ENCODE measurements at regions of chr12 and their contacts with region 1.

Region 1: DNA sequence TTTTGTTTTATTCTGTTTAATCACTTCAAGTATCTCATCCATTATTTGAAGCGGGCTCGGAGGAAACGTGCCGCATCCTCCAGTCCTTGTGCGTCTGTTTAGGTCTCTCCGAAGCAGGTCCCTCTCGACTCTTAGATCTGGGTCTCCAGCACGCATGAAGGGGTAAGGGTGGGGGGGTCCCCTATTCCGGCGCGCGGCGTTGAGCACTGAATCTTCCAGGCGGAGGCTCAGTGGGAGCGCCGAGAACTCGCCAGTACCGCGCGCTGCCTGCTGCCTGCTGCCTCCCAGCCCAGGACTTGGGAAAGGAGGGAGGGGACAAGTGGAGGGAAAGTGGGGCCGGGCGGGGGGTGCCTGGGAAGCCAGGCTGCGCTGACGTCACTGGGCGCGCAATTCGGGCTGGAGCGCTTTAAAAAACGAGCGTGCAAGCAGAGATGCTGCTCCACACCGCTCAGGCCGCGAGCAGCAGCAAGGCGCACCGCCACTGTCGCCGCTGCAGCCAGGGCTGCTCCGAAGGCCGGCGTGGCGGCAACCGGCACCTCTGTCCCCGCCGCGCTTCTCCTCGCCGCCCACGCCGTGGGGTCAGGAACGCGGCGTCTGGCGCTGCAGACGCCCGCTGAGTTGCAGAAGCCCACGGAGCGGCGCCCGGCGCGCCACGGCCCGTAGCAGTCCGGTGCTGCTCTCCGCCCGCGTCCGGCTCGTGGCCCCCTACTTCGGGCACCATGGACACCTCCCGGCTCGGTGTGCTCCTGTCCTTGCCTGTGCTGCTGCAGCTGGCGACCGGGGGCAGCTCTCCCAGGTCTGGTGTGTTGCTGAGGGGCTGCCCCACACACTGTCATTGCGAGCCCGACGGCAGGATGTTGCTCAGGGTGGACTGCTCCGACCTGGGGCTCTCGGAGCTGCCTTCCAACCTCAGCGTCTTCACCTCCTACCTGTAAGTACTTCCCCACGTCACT is at the start of gene LGR5:
- ATAC-seq: peak; percentile 62 to 92 (median 88)
- H3K4me3 ChIP-seq: peak within 1 kb of the TSS; percentile 42 to 55 (median 48)
- H3K27ac ChIP-seq: no peak within 1 kb of the TSS
- H3K4me1 ChIP-seq: peaks cover 0 to 8% of the 10 kb centered on the region in 2 donors
- total RNA-seq, gene LGR5: 0.24 to 3.1 (median 0.31) TPM in 6 of 8 experiments, not detected in the others

Region 2: DNA sequence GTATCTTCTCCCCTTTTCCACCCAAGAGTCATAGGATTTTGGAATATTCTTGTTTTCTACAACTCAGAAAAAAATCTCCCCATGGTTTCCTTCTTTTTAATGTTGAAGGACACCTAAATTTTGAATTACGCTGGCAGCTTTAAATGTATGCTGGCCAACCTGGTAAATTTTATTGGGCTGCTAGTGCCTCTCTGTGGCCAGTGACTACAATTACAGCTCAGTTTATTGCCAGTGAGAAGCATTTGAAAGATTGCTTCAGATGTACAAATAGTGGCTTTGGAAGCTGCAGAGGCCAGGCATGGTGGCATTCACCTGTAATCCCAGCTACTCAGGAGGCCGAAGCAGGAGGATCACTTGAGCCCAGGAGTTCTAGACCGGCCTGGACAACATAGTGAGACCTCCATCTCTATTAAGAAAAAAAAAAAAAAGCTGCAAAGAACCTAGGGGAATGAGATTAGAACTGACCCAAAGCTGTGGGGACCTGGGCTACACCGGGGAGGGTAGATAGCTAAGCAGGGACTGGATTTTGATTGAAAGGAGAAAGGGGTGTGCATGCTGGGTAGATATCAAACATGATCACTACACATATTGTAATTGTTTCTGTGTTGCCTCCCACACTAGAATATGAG is 307.5 kb after region 1 on chr12:
- in situ Hi-C with region 1: loop called in 1 of 9 experiments (anchors 25 kb)
- ATAC-seq: peak; percentile 47 to 92 (median 72)
- H3K4me3 ChIP-seq: no peak overlapping the region
- H3K27ac ChIP-seq: no peak overlapping the region
- H3K4me1 ChIP-seq: no peaks in the 10 kb centered on the region

Measured in motor neuron (in vitro differentiated cells).